ENCODE measurements at regions of chr5 and their contacts with region 1.

Region 1: GRCh38 chr5:41856644-41857491 is 13.4 kb downstream of the OXCT1 start:
- DNase-seq: peak in 30 of 35 experiments; percentile 9 to 88 (median 44)
- ATAC-seq: peak; percentile 81 to 94 (median 88)
- H3K4me3 ChIP-seq: no peak overlapping the region
- H3K4me3 Mint-ChIP-seq: no peak overlapping the region
- H3K27ac ChIP-seq: no peak overlapping the region
- H3K27ac Mint-ChIP-seq: no peak overlapping the region
- H3K4me1 ChIP-seq: no peaks in the 10 kb centered on the region
- H3K4me1 Mint-ChIP-seq: peaks cover under 1 to 10% (median 6%) of the 10 kb centered on the region in 3 donors
- H3K27me3 ChIP-seq: no peaks in the 10 kb centered on the region
- H3K27me3 Mint-ChIP-seq: no peaks in the 10 kb centered on the region

Region 2: DNA sequence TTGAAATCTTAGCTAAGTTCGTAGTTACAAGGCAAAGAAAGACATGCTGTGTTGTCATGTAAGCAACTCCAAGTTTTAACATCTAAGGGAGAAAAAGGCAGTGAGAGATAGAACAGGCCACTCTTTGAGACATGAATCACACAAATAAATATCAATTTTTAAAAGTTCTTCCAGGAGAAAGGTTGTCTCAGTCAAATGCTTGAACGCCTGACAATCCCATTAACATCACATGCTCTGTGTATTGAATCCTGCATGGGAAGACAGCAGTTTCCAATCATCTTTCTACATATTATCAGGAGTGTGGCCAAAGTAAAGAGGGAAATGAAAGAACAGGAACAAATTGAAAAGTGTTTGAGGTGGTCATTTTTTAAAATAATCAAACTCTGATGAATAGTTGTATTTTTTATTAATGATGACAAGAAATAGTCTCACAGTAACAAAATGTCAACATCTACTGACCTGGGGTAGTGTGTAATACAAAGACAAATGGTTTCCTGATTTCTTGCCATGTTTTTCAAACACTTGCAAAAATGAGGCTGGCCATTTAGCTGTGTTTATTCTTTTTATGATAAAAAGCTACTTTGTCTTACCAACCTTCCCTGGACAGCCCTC is 637.1 kb before region 1 on chr5:
- CTCF ChIA-PET with region 1: no interaction called
- POLR2A ChIA-PET with region 1: no interaction called
- DNase-seq: no peak
- ATAC-seq: no peak
- H3K4me3 ChIP-seq: no peak overlapping the region
- H3K4me3 Mint-ChIP-seq: no peak overlapping the region
- H3K27ac ChIP-seq: no peak overlapping the region
- H3K27ac Mint-ChIP-seq: no peak overlapping the region
- H3K4me1 ChIP-seq: no peaks in the 10 kb centered on the region
- H3K4me1 Mint-ChIP-seq: no peaks in the 10 kb centered on the region
- H3K27me3 ChIP-seq: no peaks in the 10 kb centered on the region
- H3K27me3 Mint-ChIP-seq: no peaks in the 10 kb centered on the region

Region 3: DNA sequence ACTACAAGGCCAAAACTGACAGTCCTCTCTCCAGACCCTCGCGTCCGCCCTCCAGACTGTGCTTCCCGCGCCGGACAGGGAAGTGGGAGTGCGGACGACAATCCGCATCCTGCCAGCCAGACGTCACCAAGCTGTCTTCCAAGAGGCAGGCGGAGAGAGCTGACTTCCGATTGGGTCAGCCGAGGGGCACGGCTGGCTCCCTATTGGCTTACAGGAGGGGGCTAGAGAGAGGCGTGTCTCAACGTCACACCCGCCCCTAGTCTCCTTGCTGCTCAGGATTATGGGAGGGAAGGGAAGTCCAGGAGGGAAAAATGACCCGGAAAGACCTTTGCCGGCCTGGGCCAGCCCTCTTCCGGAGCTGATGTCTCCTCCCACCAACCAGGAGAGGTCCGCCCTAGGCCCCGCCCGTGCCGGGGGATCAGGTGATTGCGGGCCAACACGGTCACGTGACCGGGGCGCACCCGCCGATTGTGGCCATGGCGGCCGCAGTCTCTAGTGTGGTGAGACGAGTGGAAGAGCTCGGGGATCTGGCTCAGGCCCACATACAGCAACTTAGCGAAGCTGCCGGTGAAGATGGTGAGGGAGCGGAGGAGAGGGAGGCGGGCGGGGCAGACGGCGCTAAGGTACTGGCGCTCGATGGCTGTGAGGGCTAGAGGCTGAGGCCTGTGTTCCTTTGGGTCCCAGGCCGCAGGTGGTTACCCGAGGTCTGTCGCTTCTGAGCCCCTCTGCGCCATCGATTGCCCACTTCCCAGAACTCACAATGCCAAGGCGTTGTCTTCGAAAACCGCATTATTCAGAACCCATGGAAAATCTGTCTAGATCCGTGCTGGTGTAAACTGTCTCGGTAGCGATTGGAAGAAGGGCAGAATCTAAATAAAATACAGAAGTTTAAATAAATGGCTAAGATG is 47.3 kb after region 1 on chr5 and contains the start of gene RIMOC1:
- CTCF ChIA-PET with region 1: interaction called, 3 to 13 read pairs
- POLR2A ChIA-PET with region 1: no interaction called
- DNase-seq: peak; percentile 90 to 98 (median 94)
- ATAC-seq: peak; percentile 90 to 97 (median 95)
- H3K4me3 ChIP-seq: peak within 1 kb of the TSS; percentile 83 to 90
- H3K4me3 Mint-ChIP-seq: peak within 1 kb of the TSS; percentile 82 to 99 (median 98)
- H3K27ac ChIP-seq: peak within 1 kb of the TSS; percentile 85
- H3K27ac Mint-ChIP-seq: peak within 1 kb of the TSS; percentile 98 to 99
- H3K4me1 ChIP-seq: peaks cover 13 to 16% of the 10 kb centered on the region in 2 experiments
- H3K4me1 Mint-ChIP-seq: peaks cover 36 to 45% (median 43%) of the 10 kb centered on the region in 3 donors
- H3K27me3 ChIP-seq: peaks cover 0 to 2% of the 10 kb centered on the region in 2 experiments
- H3K27me3 Mint-ChIP-seq: peaks cover 0 to 4% of the 10 kb centered on the region in 2 donors
- total RNA-seq, gene RIMOC1: 15.0 to 30.4 (median 28.0) TPM

Region 4: GRCh38 chr5:42057254-42057690 is 200.4 kb after region 1 on chr5:
- CTCF ChIA-PET with region 1: interaction called, 91 to 200 read pairs
- POLR2A ChIA-PET with region 1: interaction called in 1 of 2 experiments, 3 read pairs
- DNase-seq: peak in 34 of 35 experiments; percentile 7 to 72 (median 41)
- ATAC-seq: peak; percentile 62 to 78 (median 70)
- H3K4me3 ChIP-seq: no peak overlapping the region
- H3K4me3 Mint-ChIP-seq: no peak overlapping the region
- H3K27ac ChIP-seq: no peak overlapping the region
- H3K27ac Mint-ChIP-seq: no peak overlapping the region
- H3K4me1 ChIP-seq: no peaks in the 10 kb centered on the region
- H3K4me1 Mint-ChIP-seq: peaks cover 0 to 2% (median 0%) of the 10 kb centered on the region in 3 donors
- H3K27me3 ChIP-seq: peaks cover 0 to 4% of the 10 kb centered on the region in 2 experiments
- H3K27me3 Mint-ChIP-seq: peaks cover 6 to 16% of the 10 kb centered on the region in 2 donors

Region 5: DNA sequence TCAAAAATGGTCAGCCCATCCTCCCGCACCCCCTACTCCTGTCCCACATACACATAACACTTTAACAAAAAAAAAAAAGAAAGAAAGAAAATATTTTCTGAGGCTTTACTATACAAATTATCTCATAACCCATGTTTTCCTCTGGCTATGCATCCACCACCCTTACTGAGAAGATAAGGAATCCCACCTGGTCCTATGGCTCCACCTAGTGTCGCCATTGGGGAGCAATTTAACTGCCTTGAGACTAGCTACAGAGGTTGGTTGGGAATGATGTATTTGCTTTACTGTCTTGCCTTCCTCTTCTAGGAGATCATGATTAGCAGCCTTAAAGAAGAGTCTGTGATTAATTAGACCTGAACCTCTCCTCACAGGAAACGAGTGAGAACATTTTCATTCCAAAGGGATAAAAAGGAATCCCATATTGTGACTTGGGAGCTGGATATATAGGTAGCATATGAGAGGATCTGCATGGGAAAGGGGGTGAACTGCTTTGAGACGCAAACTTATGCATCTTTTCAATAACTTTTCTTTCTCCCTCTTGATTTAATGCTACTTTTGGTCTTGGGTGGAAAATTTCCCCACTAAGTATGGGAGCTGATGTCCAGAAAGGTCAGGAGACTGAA is 1032.6 kb after region 1 on chr5:
- CTCF ChIA-PET with region 1: interaction called in 1 of 2 experiments, 12 read pairs
- POLR2A ChIA-PET with region 1: no interaction called
- DNase-seq: peak; percentile 15 to 77 (median 49)
- ATAC-seq: peak; percentile 70 to 85 (median 74)
- H3K4me3 ChIP-seq: no peak overlapping the region
- H3K4me3 Mint-ChIP-seq: no peak overlapping the region
- H3K27ac ChIP-seq: no peak overlapping the region
- H3K27ac Mint-ChIP-seq: no peak overlapping the region
- H3K4me1 ChIP-seq: no peaks in the 10 kb centered on the region
- H3K4me1 Mint-ChIP-seq: no peaks in the 10 kb centered on the region
- H3K27me3 ChIP-seq: peaks cover 0 to 3% of the 10 kb centered on the region in 2 experiments
- H3K27me3 Mint-ChIP-seq: peaks cover 5 to 7% of the 10 kb centered on the region in 2 donors